B cell (primary cell): ENCODE measurements at regions of chr1 and their contacts with region 1.

Region 1: DNA sequence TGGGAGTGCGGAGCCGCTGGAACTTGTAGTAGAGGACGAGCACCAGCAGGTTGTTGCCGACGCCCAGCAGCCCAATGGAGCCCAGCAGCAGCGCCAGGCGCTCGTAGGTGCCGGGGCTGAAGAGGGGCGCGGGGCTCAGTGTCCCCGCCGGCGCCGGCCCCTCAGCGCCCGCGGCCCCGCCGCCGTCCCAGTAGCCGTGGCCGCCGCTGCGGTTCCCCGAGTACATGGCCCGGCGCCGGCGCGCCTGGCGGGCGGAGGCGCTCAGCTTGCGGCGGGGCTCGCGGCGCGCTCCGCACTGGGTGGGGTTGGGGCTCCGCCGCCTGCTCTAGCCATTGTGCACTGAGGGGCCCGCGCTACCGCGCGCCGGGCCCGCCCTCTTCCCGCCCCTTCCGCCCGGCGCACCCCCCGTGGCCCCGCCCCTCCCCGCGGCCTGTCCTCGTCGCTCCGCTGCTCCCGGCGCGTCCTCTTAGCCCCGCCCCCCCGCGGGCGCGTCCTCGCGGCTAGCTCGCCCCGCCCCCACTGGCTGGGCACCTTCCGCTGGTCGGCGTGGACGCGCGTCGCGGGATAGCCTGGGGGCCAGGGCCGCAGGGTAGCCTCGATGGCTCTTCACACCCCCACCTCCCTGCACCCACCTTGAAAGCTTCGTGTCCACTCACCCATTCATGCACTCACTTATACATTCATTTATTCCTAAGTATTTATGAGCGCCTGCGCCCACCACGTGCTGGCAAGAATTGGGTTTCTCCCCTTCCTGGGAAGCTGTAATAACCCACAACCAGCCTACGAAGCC is at the starts of genes CHML and OPN3:
- DNase-seq: peak; percentile 93
- ATAC-seq: peak; percentile 94
- H3K4me3 ChIP-seq: peak within 1 kb of the TSS; percentile 78 to 97 (median 94)
- H3K4me3 Mint-ChIP-seq: peak within 1 kb of the TSS; percentile 84
- H3K27ac ChIP-seq: peak within 1 kb of the TSS; percentile 71 to 81
- H3K27ac Mint-ChIP-seq: peak within 1 kb of the TSS; percentile 93
- H3K4me1 ChIP-seq: peaks cover 37 to 43% of the 10 kb centered on the region in 2 donors
- H3K4me1 Mint-ChIP-seq: peaks cover 51% of the 10 kb centered on the region
- H3K27me3 ChIP-seq: no peaks in the 10 kb centered on the region
- H3K27me3 Mint-ChIP-seq: no peaks in the 10 kb centered on the region
- CTCF ChIP-seq: no peak
- total RNA-seq, gene CHML: 31.5 and 34.0 TPM in 2 replicates
- total RNA-seq, gene OPN3: 29.2 and 29.6 TPM in 2 replicates

Region 2: GRCh38 chr1:241519308-241520079 is 120.7 kb before region 1 on chr1 and contains the start of gene FH:
- CTCF ChIA-PET with region 1: no interaction called
- POLR2A ChIA-PET with region 1: no interaction called
- intact Hi-C with region 1: loop called (anchors 1 kb)
- DNase-seq: peak; percentile 97
- ATAC-seq: peak; percentile 98
- H3K4me3 ChIP-seq: peak within 1 kb of the TSS; percentile 56 to 84 (median 79)
- H3K4me3 Mint-ChIP-seq: peak within 1 kb of the TSS; percentile 89
- H3K27ac ChIP-seq: peak within 1 kb of the TSS; percentile 56 to 84
- H3K27ac Mint-ChIP-seq: peak within 1 kb of the TSS; percentile 71
- H3K4me1 ChIP-seq: peaks cover 9 to 10% of the 10 kb centered on the region in 2 donors
- H3K4me1 Mint-ChIP-seq: peaks cover 23% of the 10 kb centered on the region
- H3K27me3 ChIP-seq: peaks cover 0 to 3% (median 0%) of the 10 kb centered on the region in 4 experiments
- H3K27me3 Mint-ChIP-seq: peaks cover 3% of the 10 kb centered on the region
- CTCF ChIP-seq: no peak
- total RNA-seq, gene FH: 26.0 and 32.4 TPM in 2 replicates

Region 3: GRCh38 chr1:241551759-241552638 is 88.2 kb before region 1 on chr1:
- CTCF ChIA-PET with region 1: interaction called, 3 read pairs
- POLR2A ChIA-PET with region 1: interaction called, 4 read pairs
- intact Hi-C with region 1: loop called (anchors 1 kb)
- DNase-seq: peak; percentile 93
- ATAC-seq: peak; percentile 91
- H3K4me3 ChIP-seq: peak overlapping the region; percentile 52 to 77 (median 65)
- H3K4me3 Mint-ChIP-seq: peak overlapping the region; percentile 93
- H3K27ac ChIP-seq: peak overlapping the region; percentile 95 to 97
- H3K27ac Mint-ChIP-seq: peak overlapping the region; percentile 99
- H3K4me1 ChIP-seq: peaks cover 39 to 41% of the 10 kb centered on the region in 2 donors
- H3K4me1 Mint-ChIP-seq: peaks cover 51% of the 10 kb centered on the region
- H3K27me3 ChIP-seq: no peaks in the 10 kb centered on the region
- H3K27me3 Mint-ChIP-seq: peaks cover 3% of the 10 kb centered on the region
- CTCF ChIP-seq: no peak

Region 4: GRCh38 chr1:241600496-241600901 is 39.7 kb before region 1 on chr1:
- CTCF ChIA-PET with region 1: interaction called, 3 read pairs
- POLR2A ChIA-PET with region 1: interaction called, 5 read pairs
- intact Hi-C with region 1: loop called (anchors 5 kb)
- DNase-seq: peak; percentile 24
- ATAC-seq: peak; percentile 49
- H3K4me3 ChIP-seq: peak overlapping the region in 1 of 5 experiments; percentile 3
- H3K4me3 Mint-ChIP-seq: peak overlapping the region; percentile 35
- H3K27ac ChIP-seq: peak overlapping the region; percentile 34 to 67
- H3K27ac Mint-ChIP-seq: peak overlapping the region; percentile 79
- H3K4me1 ChIP-seq: peaks cover 33 to 37% of the 10 kb centered on the region in 2 donors
- H3K4me1 Mint-ChIP-seq: peaks cover 49% of the 10 kb centered on the region
- H3K27me3 ChIP-seq: no peaks in the 10 kb centered on the region
- H3K27me3 Mint-ChIP-seq: no peaks in the 10 kb centered on the region
- CTCF ChIP-seq: no peak

Region 5: DNA sequence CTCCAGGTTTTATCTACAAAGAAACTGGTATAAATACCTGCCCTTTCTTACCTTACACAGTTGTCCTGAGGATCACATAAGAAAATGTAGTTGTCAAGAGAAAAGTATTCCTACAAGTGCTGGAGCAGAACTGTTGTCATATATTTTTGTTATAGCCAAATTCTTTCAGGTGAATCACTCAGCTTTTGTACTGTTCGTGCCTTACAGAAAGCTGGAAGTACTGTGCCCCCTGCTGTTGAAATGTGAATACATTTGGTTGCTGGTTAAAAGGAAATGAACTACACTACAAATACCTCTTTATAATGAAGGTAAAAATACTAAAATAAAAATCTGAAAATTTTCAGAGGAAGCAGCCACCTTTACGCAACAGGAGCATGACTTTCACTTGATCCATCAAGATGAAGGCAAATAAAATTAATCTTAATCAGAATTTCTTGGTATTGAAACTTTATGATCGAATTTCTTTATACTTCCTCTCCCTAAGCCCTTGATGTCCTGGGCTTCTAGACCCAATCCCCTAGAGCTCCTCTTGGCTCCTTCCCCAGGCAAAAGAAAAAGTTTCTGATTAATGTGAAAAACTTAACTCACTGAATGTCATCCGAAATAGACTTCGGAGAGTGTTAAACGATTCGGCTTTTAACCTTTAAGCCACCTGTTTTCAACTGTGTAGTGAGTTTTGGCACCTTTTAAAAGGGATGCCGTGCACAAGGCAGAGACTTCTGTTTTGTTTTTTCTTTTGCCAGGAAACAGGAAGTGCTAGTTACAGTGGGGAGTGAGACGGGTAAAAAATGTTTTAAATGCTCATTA is 12.6 kb before region 1 on chr1:
- CTCF ChIA-PET with region 1: interaction called, 13 read pairs
- POLR2A ChIA-PET with region 1: interaction called, 3 read pairs
- intact Hi-C with region 1: loop called (anchors 1 kb)
- DNase-seq: peak; percentile 78
- ATAC-seq: peak; percentile 83
- H3K4me3 ChIP-seq: peak overlapping the region in 4 of 5 experiments; percentile 6 to 41 (median 17)
- H3K4me3 Mint-ChIP-seq: peak overlapping the region; percentile 63
- H3K27ac ChIP-seq: peak overlapping the region; percentile 66 to 71
- H3K27ac Mint-ChIP-seq: peak overlapping the region; percentile 88
- H3K4me1 ChIP-seq: peaks cover 14 to 25% of the 10 kb centered on the region in 2 donors
- H3K4me1 Mint-ChIP-seq: peaks cover 42% of the 10 kb centered on the region
- H3K27me3 ChIP-seq: no peaks in the 10 kb centered on the region
- H3K27me3 Mint-ChIP-seq: no peaks in the 10 kb centered on the region
- CTCF ChIP-seq: peak; percentile 82

Region 6: DNA sequence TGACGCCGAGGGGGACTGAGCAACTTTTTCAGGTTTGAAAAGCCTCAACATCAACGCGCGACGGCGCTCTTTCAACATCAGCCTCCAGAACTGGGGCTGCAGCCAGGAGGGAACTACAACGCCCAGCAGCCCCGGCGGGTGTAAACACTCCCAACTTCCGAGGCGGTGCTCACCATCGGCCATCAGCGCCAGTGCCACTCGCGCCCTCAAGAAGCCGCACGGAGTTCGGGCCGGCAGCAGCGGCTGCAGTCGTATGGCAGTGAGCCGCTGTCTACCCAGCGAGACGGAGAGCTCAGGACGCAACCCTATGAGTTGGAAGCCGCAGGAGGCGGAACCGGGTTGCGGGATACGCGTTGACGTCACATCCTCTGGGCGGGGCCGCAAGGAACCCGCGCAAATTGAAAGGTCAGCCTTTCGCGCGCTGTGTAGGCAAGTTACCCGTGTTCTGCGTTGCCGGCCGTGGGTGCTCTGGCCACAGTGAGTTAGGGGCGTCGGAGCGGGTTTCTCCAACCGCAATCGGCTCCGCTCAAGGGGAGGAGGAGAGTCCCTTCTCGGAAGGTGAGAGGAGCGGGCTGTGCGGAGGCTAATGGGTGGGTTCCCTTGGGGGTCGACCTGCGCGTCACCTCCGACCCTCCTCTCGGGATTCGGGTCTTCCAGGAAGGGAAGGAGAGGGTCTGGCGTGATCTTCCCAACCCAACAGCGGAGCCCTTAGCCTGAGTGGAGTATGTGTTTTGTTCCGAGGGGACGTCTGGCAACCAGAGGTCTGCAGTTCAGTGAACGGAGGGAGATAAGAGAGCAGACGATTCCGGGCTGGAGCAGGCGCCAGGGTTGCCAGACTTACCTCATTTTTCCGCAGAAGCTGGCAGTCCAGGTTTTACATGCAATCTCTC is 207.8 kb after region 1 on chr1 and contains the start of gene EXO1:
- CTCF ChIA-PET with region 1: interaction called, 7 read pairs
- POLR2A ChIA-PET with region 1: interaction called, 3 read pairs
- intact Hi-C with region 1: loop called (anchors 1 kb)
- DNase-seq: peak; percentile 96
- ATAC-seq: peak; percentile 98
- H3K4me3 ChIP-seq: peak within 1 kb of the TSS; percentile 73 to 98 (median 95)
- H3K4me3 Mint-ChIP-seq: peak within 1 kb of the TSS; percentile 99
- H3K27ac ChIP-seq: peak within 1 kb of the TSS; percentile 92 to 97
- H3K27ac Mint-ChIP-seq: peak within 1 kb of the TSS; percentile 99
- H3K4me1 ChIP-seq: peaks cover 9 to 12% of the 10 kb centered on the region in 2 donors
- H3K4me1 Mint-ChIP-seq: peaks cover 17% of the 10 kb centered on the region
- H3K27me3 ChIP-seq: no peaks in the 10 kb centered on the region
- H3K27me3 Mint-ChIP-seq: no peaks in the 10 kb centered on the region
- CTCF ChIP-seq: peak; percentile 47
- total RNA-seq, gene EXO1: 1.2 and 1.6 TPM in 2 replicates